Heart right ventricle (tissue), 16 donors: ENCODE measurements at regions of chr1 and their contacts with region 1.

Region 1: GRCh38 chr1:182699393-182700350 is 15.3 kb upstream of the RGS8 start:
- DNase-seq: peak; percentile 10 to 59
- ATAC-seq: peak; percentile 45 to 71 (median 56)
- H3K4me3 ChIP-seq: peak overlapping the region in 1 of 10 donors; percentile 17
- H3K27ac ChIP-seq: peak overlapping the region in 5 of 10 donors; percentile 6 to 29 (median 23)
- H3K4me1 ChIP-seq: peaks cover 3 to 31% (median 14%) of the 10 kb centered on the region in 9 donors
- H3K27me3 ChIP-seq: peaks cover 0 to 7% (median 0%) of the 10 kb centered on the region in 7 donors
- CTCF ChIP-seq: no peak

Region 2: DNA sequence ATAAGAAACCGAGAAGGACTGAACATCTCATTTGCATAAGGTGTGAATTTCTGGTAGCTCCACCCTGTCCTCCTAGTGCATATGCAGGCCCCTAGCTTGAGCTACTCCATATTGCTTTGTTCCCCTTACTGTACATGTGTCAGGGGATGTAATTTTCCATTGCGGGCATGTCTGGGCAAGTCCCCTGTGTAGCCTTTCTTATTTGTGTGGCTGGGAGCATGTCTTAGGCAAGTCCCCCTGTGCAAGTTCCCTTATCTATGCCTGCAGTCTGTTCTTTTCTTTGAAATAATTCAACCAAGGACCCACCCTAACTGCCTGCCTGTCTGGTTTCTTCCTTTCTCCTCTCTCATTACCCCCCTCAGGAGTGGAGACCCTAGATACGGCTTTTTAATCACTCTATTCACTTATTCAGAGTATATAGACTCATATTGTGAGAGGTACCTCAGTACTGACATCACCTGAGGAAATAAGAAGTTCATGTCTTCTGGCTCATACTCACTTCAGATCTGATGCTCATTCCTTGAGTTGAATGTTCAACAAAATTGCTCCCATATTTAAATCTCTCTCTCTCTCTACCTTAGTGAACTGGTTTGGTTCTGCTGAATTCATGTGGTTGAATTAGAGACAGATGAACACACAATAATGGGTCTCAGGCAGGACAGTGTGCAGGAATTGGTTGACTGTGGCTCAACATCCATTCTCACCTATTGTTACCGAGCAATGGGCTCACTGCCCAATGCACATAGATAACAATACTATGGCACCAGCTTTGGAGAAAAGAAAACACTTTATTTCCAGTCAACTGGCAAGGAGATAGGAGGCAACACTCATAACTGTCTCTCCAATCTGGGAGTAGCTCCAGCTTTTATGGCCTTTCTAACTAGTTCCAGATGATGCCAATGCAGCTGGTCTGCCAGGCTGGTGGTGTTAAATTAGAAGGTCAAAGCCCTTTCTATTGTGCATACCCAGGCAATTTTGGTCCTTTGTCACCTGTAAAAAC is 62.0 kb after region 1 on chr1:
- intact Hi-C with region 1: loop called in 1 of 10 experiments (anchors 10 kb)
- DNase-seq: no peak
- ATAC-seq: peak in 2 of 8 donors; percentile 41 to 55
- H3K4me3 ChIP-seq: no peak overlapping the region
- H3K27ac ChIP-seq: no peak overlapping the region
- H3K4me1 ChIP-seq: peaks cover 0 to 13% (median 5%) of the 10 kb centered on the region in 9 donors
- H3K27me3 ChIP-seq: no peaks in the 10 kb centered on the region
- CTCF ChIP-seq: no peak